HepG2 (cell line): ENCODE measurements at regions of chrX and their contacts with region 1.

Region 1: DNA sequence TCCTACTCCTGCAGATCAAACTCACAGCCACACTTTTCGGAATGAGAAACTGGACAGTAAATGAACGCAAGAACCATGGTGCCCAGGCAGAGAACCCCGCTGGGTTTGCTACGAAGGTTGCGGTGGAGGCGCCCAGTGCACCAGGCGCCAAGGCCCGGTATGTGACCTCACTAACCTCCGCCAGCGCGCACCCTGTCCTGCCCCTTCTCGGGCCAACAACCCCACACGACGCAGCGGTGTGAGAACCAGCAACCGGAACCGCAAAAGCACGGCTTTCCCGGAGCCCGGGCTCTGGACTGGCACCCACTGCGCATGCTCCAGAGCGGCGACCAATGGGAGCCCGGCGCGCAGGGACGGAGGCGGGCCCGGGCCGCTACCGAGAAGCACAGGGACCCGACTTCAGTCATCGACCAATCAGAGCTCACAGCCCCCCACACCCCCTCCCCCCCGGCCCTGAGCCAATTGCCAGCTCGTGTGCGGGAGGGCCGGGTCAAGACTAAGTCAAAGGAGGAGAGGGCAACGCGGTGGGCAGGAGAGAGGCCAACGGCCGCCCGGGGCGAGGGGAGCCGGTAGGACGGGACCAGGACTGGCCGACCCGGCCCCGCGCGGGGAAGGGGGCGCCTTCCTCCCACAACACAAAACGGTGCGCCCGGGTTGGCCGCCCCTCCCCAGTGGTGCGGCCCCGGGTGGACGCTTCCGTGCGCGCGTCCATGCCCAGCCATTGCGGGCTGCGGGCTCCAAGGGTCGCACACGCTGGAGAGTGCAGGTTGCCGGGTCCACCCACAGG is 7.3 kb upstream of the WAS start:
- DNase-seq: peak; percentile 84
- ATAC-seq: peak; percentile 88
- H3K4me3 ChIP-seq: peak overlapping the region; percentile 69 to 93 (median 87)
- H3K27ac ChIP-seq: peak overlapping the region; percentile 98
- H3K4me1 ChIP-seq: peaks cover 23% of the 10 kb centered on the region
- H3K27me3 ChIP-seq: no peaks in the 10 kb centered on the region
- CTCF ChIP-seq: no peak
- EP300 ChIP-seq: no peak
- POLR2A ChIP-seq: peak; percentile 78 to 87
- RAD21 ChIP-seq: no peak

Region 2: GRCh38 chrX:48493890-48494364 is 182.4 kb before region 1 on chrX:
- CTCF ChIA-PET with region 1: no interaction called
- POLR2A ChIA-PET with region 1: no interaction called
- in situ Hi-C with region 1: no loop called
- intact Hi-C with region 1: no loop called
- DNase-seq: peak; percentile 55
- ATAC-seq: peak; percentile 79
- H3K4me3 ChIP-seq: no peak overlapping the region
- H3K27ac ChIP-seq: no peak overlapping the region
- H3K4me1 ChIP-seq: peaks cover 26% of the 10 kb centered on the region
- H3K27me3 ChIP-seq: no peaks in the 10 kb centered on the region; a peak in 1 of 5 replicates
- CTCF ChIP-seq: peak; percentile 83
- EP300 ChIP-seq: no peak
- POLR2A ChIP-seq: no peak
- RAD21 ChIP-seq: peak; percentile 58

Region 3: GRCh38 chrX:48508400-48509244 is 167.7 kb before region 1 on chrX and contains the start of gene PORCN:
- CTCF ChIA-PET with region 1: no interaction called
- POLR2A ChIA-PET with region 1: no interaction called
- in situ Hi-C with region 1: no loop called
- intact Hi-C with region 1: no loop called
- DNase-seq: peak; percentile 35
- ATAC-seq: peak; percentile 94
- H3K4me3 ChIP-seq: peak within 1 kb of the TSS; percentile 58 to 77 (median 73)
- H3K27ac ChIP-seq: peak within 1 kb of the TSS; percentile 38
- H3K4me1 ChIP-seq: peaks cover 10% of the 10 kb centered on the region
- H3K27me3 ChIP-seq: no peaks in the 10 kb centered on the region
- CTCF ChIP-seq: no peak
- EP300 ChIP-seq: no peak
- POLR2A ChIP-seq: peak in 1 of 2 experiments; percentile 77; a peak in 2 of 4 replicates
- RAD21 ChIP-seq: no peak
- total RNA-seq, gene PORCN: 2.6 and 3.9 TPM in 2 replicates

Region 4: GRCh38 chrX:48636776-48637175 is 39.5 kb before region 1 on chrX:
- CTCF ChIA-PET with region 1: no interaction called
- POLR2A ChIA-PET with region 1: no interaction called
- in situ Hi-C with region 1: no loop called
- intact Hi-C with region 1: no loop called
- DNase-seq: no peak
- ATAC-seq: no peak
- H3K4me3 ChIP-seq: no peak overlapping the region
- H3K27ac ChIP-seq: no peak overlapping the region
- H3K4me1 ChIP-seq: peaks cover 6% of the 10 kb centered on the region
- H3K27me3 ChIP-seq: no peaks in the 10 kb centered on the region
- CTCF ChIP-seq: no peak
- EP300 ChIP-seq: no peak
- POLR2A ChIP-seq: no peak
- RAD21 ChIP-seq: no peak

Region 5: DNA sequence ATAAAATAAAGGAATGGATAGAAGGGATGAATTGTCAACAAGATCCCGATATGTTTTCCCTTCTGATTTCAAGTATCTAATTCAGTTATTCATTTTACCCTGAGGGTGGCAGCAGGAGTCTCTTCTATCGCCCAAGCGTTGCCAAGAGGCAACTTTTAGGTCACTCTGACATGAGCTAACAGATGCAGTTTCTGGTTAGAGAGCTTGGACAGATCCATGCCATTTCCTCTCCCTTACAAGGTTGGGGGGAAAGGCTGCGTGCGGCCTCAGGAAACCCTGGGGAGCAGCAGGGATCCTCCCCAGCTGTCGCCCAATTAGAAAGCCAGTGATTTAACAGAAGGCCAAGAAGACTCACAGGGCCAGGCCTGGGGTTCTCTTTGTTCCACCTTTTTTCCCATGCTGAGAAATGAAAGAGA is 28.0 kb before region 1 on chrX:
- CTCF ChIA-PET with region 1: no interaction called
- POLR2A ChIA-PET with region 1: interaction called, 10 read pairs
- in situ Hi-C with region 1: no loop called
- intact Hi-C with region 1: no loop called
- DNase-seq: peak; percentile 28
- ATAC-seq: peak; percentile 69
- H3K4me3 ChIP-seq: no peak overlapping the region
- H3K27ac ChIP-seq: no peak overlapping the region
- H3K4me1 ChIP-seq: no peaks in the 10 kb centered on the region
- H3K27me3 ChIP-seq: 0 out of 5 replicates have a peak, but pooled peaks cover 0 to 3% of the 10 kb centered on the region in 2 experiments
- CTCF ChIP-seq: peak; percentile 63
- EP300 ChIP-seq: no peak
- POLR2A ChIP-seq: no peak
- RAD21 ChIP-seq: no peak

Region 6: DNA sequence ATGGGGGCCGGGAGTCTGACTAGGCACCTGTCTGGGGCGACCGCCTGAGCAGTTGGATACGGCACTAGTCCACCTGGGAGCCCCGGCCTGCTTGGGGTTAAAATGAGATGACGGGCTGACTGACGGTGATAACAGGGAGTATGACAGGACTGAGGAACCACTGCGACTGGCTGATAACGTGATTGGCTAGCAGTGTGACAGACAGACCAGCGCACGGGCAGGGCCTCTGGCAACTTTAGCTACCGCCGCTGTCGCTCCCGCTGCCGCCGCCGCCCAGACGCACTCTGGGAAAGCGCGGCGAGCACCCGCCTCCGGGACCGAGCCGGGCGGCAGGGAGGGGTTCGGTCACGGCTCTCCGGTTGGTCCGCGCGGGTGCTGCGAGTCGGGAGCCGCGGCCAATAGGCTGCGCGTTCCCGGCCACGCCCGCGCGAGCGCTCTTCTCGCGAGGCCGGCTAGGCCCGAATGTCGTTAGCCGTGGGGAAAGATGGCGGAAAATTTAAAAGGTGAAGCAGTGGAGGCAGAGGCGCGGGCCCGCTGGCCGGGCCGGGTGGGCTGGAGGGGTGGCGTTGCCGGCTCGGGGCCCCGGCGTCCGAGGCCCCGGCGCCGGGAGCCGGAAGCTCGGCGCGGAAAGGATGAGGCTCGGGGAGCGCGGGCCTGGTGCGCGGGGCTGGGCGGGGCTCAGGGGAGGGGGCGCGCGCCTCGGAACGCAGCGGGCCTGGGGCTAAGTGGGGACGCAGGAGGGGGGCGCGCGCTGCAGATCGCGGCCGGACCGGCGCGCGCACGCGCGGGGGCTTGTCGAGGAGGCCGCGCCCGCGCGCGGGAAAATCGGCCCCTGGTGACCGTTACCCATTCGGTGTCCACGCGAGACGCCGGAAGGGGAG is 20.2 kb after region 1 on chrX and contains the start of gene SUV39H1:
- CTCF ChIA-PET with region 1: no interaction called
- POLR2A ChIA-PET with region 1: interaction called, 35 read pairs
- in situ Hi-C with region 1: no loop called
- intact Hi-C with region 1: loop called (anchors 2 kb)
- DNase-seq: peak; percentile 71
- ATAC-seq: peak; percentile 94
- H3K4me3 ChIP-seq: peak within 1 kb of the TSS; percentile 54 to 75 (median 62)
- H3K27ac ChIP-seq: peak within 1 kb of the TSS; percentile 65
- H3K4me1 ChIP-seq: peaks cover 17% of the 10 kb centered on the region
- H3K27me3 ChIP-seq: no peaks in the 10 kb centered on the region
- CTCF ChIP-seq: no peak
- EP300 ChIP-seq: no peak
- POLR2A ChIP-seq: peak; percentile 52 to 74
- RAD21 ChIP-seq: no peak
- total RNA-seq, gene SUV39H1: 9.9 and 10.1 TPM in 2 replicates

Region 7: GRCh38 chrX:48801280-48802088 is 125.2 kb after region 1 on chrX and contains the start of gene HDAC6:
- CTCF ChIA-PET with region 1: no interaction called
- POLR2A ChIA-PET with region 1: interaction called, 17 read pairs
- in situ Hi-C with region 1: no loop called
- intact Hi-C with region 1: no loop called
- DNase-seq: peak; percentile 95
- ATAC-seq: peak; percentile 91
- H3K4me3 ChIP-seq: peak within 1 kb of the TSS; percentile 80 to 84 (median 81)
- H3K27ac ChIP-seq: peak within 1 kb of the TSS; percentile 98
- H3K4me1 ChIP-seq: peaks cover 38% of the 10 kb centered on the region
- H3K27me3 ChIP-seq: no peaks in the 10 kb centered on the region; a peak in 1 of 5 replicates
- CTCF ChIP-seq: no peak
- EP300 ChIP-seq: no peak
- POLR2A ChIP-seq: peak in 1 of 2 experiments; percentile 44; a peak in 2 of 4 replicates
- RAD21 ChIP-seq: no peak
- total RNA-seq, gene HDAC6: 57.8 and 80.4 TPM in 2 replicates

Region 8: GRCh38 chrX:49129427-49129826 is 453.1 kb after region 1 on chrX:
- CTCF ChIA-PET with region 1: no interaction called
- POLR2A ChIA-PET with region 1: no interaction called
- in situ Hi-C with region 1: no loop called
- intact Hi-C with region 1: no loop called
- DNase-seq: no peak
- ATAC-seq: no peak
- H3K4me3 ChIP-seq: no peak overlapping the region
- H3K27ac ChIP-seq: no peak overlapping the region
- H3K4me1 ChIP-seq: no peaks in the 10 kb centered on the region
- H3K27me3 ChIP-seq: no peaks in the 10 kb centered on the region
- CTCF ChIP-seq: no peak
- EP300 ChIP-seq: no peak
- POLR2A ChIP-seq: no peak
- RAD21 ChIP-seq: no peak